Testis (tissue), 5 donors: ENCODE measurements at regions of chr9 and their contacts with region 1.

Region 1: GRCh38 chr9:125241000-125241862 is at the start of gene HSPA5:
- DNase-seq: peak; percentile 100
- H3K4me3 ChIP-seq: peak within 1 kb of the TSS; percentile 80 to 82
- H3K27ac ChIP-seq: peak within 1 kb of the TSS; percentile 83 to 93
- H3K4me1 ChIP-seq: peaks cover 34% of the 10 kb centered on the region
- H3K27me3 ChIP-seq: no peaks in the 10 kb centered on the region
- CTCF ChIP-seq: peak in 2 of 3 experiments; percentile 6 to 14
- POLR2A ChIP-seq: peak; percentile 97
- total RNA-seq, gene HSPA5: 183 to 190 TPM

Region 2: DNA sequence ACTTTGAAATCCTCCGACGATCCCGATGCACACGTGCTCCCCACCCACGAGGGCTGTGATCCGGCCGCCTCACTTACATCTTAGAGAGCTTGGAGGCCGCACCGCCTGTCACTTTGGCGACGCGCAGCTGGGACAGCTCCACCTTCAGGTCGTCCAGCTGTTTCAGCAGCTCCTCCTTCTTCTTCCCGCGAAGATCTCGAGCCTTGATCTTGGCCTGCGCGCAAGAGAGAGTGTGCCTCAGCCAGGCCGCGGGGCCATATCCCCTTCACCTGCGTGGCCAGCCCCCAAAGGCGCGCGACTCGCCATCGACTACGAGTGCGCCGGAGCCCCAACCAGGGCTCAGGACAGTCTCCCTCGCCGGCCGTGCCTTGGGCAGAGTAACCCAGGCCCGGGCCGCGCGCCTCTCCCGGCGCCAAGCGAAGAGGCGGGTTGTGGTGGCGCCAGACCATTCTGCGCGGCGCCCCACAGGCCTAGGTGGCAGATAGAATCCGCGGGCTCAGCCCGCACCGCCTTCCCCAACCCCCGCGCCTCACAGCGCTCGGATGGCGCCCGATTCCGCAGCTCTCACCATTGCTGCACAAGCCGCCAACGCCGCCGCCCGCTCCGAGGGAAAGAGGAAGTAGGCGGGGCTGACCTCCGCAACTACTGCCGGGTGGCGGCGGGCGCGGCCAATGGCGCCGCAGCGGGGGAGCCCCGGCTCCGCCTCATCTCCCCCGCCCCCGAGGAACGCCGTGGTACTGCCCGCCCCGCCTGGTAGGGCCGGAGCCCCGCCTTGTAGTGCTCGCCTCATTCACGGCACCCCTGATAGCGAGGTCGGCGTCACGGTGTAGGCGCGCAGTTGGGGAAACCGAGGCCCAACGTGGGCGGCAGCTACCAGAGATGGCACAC is 379.6 kb before region 1 on chr9 and contains the starts of genes ARPC5L and RPL35:
- intact Hi-C with region 1: loop called (anchors 10 kb)
- DNase-seq: peak; percentile 96
- H3K4me3 ChIP-seq: peak within 1 kb of the TSS; percentile 78 to 89
- H3K27ac ChIP-seq: peak within 1 kb of the TSS; percentile 66 to 87
- H3K4me1 ChIP-seq: peaks cover 14% of the 10 kb centered on the region
- H3K27me3 ChIP-seq: no peaks in the 10 kb centered on the region
- CTCF ChIP-seq: peak in 1 of 3 experiments; percentile 22
- POLR2A ChIP-seq: peak; percentile 70
- total RNA-seq, gene ARPC5L: 64.7 to 75.4 TPM
- total RNA-seq, gene RPL35: 902 to 1,286 TPM

Region 3: GRCh38 chr9:125099816-125100215 is 141.4 kb before region 1 on chr9:
- intact Hi-C with region 1: no loop called
- DNase-seq: no peak
- H3K4me3 ChIP-seq: no peak overlapping the region
- H3K27ac ChIP-seq: no peak overlapping the region
- H3K4me1 ChIP-seq: no peaks in the 10 kb centered on the region
- H3K27me3 ChIP-seq: no peaks in the 10 kb centered on the region
- CTCF ChIP-seq: no peak
- POLR2A ChIP-seq: no peak